Activated CD8-positive, alpha-beta T cell treated with anti-CD3 and anti-CD28 coated beads, Interleukin-2, amount 10 ng/mL, durations not matched to agents 7 days and 5 days (primary cell): ENCODE measurements at regions of chr21 and their contacts with region 1.

Region 1: GRCh38 chr21:17911628-17912027 is 92.5 kb upstream of the C21orf91 start:
- DNase-seq: no peak
- ATAC-seq: no peak
- H3K4me3 Mint-ChIP-seq: no peak overlapping the region
- H3K27ac Mint-ChIP-seq: no peak overlapping the region
- H3K4me1 Mint-ChIP-seq: no peaks in the 10 kb centered on the region
- H3K27me3 Mint-ChIP-seq: no peaks in the 10 kb centered on the region

Region 2: DNA sequence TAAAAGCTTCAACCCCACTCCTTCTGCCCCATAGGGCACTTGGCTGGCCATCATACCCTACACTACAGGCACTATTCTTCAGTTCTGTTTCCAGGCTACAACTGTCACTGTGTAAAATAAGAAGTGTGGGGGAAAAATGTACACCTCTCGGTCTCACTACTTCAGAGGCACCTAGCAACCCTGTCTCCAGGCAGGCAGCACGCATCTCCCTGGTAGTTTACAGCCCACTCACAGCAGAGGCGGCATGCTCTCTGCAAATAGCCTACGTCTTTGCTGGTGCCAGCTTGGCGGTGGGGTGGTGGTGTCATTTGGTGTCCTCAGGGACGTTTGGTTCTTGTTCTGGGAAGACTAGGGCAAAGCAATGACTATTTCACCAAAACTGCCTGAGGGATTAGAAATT is 250.8 kb before region 1 on chr21:
- CTCF ChIA-PET with region 1: no interaction called
- POLR2A ChIA-PET with region 1: no interaction called
- DNase-seq: no peak
- ATAC-seq: no peak
- H3K4me3 Mint-ChIP-seq: no peak overlapping the region
- H3K27ac Mint-ChIP-seq: no peak overlapping the region
- H3K4me1 Mint-ChIP-seq: no peaks in the 10 kb centered on the region
- H3K27me3 Mint-ChIP-seq: peaks cover 8% of the 10 kb centered on the region

Region 3: GRCh38 chr21:17819114-17819876 is 92.3 kb before region 1 on chr21 and contains the start of gene C21orf91:
- CTCF ChIA-PET with region 1: no interaction called
- POLR2A ChIA-PET with region 1: no interaction called
- DNase-seq: peak; percentile 91
- ATAC-seq: peak; percentile 87
- H3K4me3 Mint-ChIP-seq: peak within 1 kb of the TSS; percentile 85
- H3K27ac Mint-ChIP-seq: peak within 1 kb of the TSS; percentile 100
- H3K4me1 Mint-ChIP-seq: peaks cover 39% of the 10 kb centered on the region
- H3K27me3 Mint-ChIP-seq: no peaks in the 10 kb centered on the region
- total RNA-seq, gene C21orf91: 51.8 to 57.9 TPM

Region 4: GRCh38 chr21:17925000-17925610 is 13.5 kb after region 1 on chr21:
- CTCF ChIA-PET with region 1: interaction called, 13 read pairs
- POLR2A ChIA-PET with region 1: no interaction called
- DNase-seq: peak; percentile 72
- ATAC-seq: peak; percentile 98
- H3K4me3 Mint-ChIP-seq: no peak overlapping the region
- H3K27ac Mint-ChIP-seq: no peak overlapping the region
- H3K4me1 Mint-ChIP-seq: peaks cover 3% of the 10 kb centered on the region
- H3K27me3 Mint-ChIP-seq: peaks cover 10% of the 10 kb centered on the region